HepG2 (cell line): ENCODE measurements at regions of chr4 and their contacts with region 1.

Region 1: DNA sequence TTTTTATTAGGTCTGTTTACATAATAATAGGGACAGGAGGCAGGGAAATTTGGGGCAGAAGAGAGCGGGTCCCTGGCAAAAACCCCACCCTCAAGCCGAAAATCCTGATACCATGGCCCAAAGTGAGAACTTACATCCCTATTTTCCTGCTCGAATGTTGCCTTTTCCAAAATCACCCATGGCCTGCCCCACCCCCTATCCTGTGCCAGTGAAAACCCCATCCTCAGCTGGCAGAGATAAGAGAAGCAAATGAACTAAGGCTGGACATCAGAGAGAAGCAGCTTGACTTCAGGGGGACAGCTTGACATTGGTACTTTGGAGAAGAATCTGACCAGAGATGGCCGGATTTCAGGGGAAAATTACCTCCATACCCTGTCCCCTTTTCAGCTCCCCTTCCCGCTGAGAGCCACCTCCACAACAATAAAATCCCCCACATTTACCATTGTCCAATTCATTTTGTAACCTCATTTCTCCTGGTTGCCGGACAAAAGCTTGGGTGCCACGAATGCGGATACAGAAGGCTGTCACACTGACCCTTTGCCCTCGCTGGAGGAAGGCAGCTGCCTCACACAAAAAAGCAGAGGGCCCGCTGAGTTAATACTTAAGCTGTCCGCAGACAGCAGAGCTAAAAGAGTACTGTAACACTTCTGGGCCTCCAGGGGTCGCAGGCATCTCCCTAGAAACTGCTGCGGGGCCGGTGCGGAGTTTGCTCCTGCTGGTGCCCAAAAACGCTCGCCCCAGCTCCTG is 196.2 kb downstream of the SNCA start:
- DNase-seq: peak; percentile 80
- ATAC-seq: peak; percentile 99
- H3K4me3 ChIP-seq: peak overlapping the region; percentile 51 to 68 (median 59)
- H3K27ac ChIP-seq: peak overlapping the region; percentile 27
- H3K4me1 ChIP-seq: peaks cover 11% of the 10 kb centered on the region
- H3K27me3 ChIP-seq: no peaks in the 10 kb centered on the region
- CTCF ChIP-seq: peak; percentile 90
- EP300 ChIP-seq: no peak
- POLR2A ChIP-seq: no peak
- RAD21 ChIP-seq: peak; percentile 71

Region 2: DNA sequence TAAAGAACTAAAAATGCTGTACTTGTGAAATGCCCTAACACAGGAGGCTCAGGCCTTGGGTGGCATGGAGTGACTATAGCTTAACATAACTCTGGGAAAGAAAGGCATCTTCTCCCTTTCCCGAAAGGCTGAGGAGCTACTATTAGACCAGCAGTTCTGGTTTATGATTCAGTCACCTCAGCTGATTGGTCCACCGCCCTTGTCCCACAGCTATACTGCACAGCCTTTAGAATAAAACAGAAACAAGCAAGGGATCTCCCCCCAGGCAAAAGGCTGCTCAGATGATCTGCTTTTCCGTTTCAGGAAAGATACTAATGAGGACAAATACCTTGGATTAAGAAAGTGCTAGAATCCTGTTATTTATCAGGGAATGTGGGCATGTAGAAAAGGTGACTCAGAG is 24.9 kb after region 1 on chr4:
- CTCF ChIA-PET with region 1: no interaction called
- POLR2A ChIA-PET with region 1: no interaction called
- in situ Hi-C with region 1: no loop called
- intact Hi-C with region 1: no loop called
- DNase-seq: no peak
- ATAC-seq: no peak
- H3K4me3 ChIP-seq: no peak overlapping the region
- H3K27ac ChIP-seq: no peak overlapping the region
- H3K4me1 ChIP-seq: no peaks in the 10 kb centered on the region
- H3K27me3 ChIP-seq: no peaks in the 10 kb centered on the region
- CTCF ChIP-seq: no peak
- EP300 ChIP-seq: no peak
- POLR2A ChIP-seq: no peak
- RAD21 ChIP-seq: no peak

Region 3: GRCh38 chr4:89681215-89681614 is 40.4 kb after region 1 on chr4:
- CTCF ChIA-PET with region 1: no interaction called
- POLR2A ChIA-PET with region 1: interaction called, 9 read pairs
- in situ Hi-C with region 1: no loop called
- intact Hi-C with region 1: loop called (anchors 1 kb)
- DNase-seq: peak; percentile 82
- ATAC-seq: peak; percentile 100
- H3K4me3 ChIP-seq: peak overlapping the region; percentile 52 to 79 (median 64); a peak in 5 of 6 replicates
- H3K27ac ChIP-seq: peak overlapping the region; percentile 72
- H3K4me1 ChIP-seq: peaks cover 36% of the 10 kb centered on the region
- H3K27me3 ChIP-seq: no peaks in the 10 kb centered on the region
- CTCF ChIP-seq: no peak
- EP300 ChIP-seq: peak in 1 of 2 experiments; percentile 42; a peak in 1 of 4 replicates
- POLR2A ChIP-seq: peak; percentile 89 to 90
- RAD21 ChIP-seq: no peak

Region 4: DNA sequence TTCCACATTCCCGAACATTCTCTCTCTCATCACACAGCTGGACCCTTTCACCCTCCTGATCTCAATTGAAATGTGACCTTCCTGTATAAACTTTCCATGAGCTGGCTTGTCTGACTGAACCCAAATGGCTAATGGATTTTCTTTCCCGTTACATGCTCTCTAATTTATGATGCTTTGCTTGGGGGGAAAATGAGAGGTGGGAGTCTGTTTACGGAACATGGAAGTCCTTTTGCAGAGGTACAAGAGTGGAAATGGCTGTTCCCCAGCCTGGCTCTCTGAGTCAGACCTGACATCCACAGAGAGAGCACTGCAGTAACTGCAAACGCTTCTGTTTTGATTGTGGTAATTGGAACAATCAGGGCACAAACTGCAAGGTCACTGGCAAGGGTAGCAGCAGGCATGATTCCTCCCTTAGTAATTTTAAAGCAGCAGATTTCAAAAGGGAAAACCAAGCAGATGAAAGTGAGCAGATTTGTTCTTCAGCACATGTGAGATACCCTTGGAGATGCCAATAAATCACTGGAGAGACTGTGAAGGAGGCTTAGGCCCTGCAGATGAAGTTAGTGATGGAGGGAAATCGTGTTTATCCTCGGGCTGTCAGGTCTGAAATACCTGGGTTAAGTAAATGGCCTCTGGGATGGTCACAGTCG is 112.3 kb after region 1 on chr4:
- CTCF ChIA-PET with region 1: no interaction called
- POLR2A ChIA-PET with region 1: no interaction called
- in situ Hi-C with region 1: no loop called
- intact Hi-C with region 1: loop called (anchors 10 kb)
- DNase-seq: no peak
- ATAC-seq: no peak
- H3K4me3 ChIP-seq: no peak overlapping the region
- H3K27ac ChIP-seq: no peak overlapping the region
- H3K4me1 ChIP-seq: no peaks in the 10 kb centered on the region
- H3K27me3 ChIP-seq: no peaks in the 10 kb centered on the region
- CTCF ChIP-seq: no peak
- EP300 ChIP-seq: no peak
- POLR2A ChIP-seq: no peak
- RAD21 ChIP-seq: no peak